Dorsolateral prefrontal cortex (tissue), 120 donors: ENCODE measurements at regions of chr6 and their contacts with region 1.

Region 1: GRCh38 chr6:154156135-154156896 is 117.3 kb downstream of the OPRM1 start:
- DNase-seq: peak in 7 of 10 donors; percentile 7 to 57 (median 39)
- H3K4me3 ChIP-seq: peak overlapping the region in 1 of 59 donors; percentile 41
- H3K27ac ChIP-seq: peak overlapping the region in 29 of 59 donors; percentile 1 to 84 (median 43)
- H3K27me3 ChIP-seq: no peaks in the 10 kb centered on the region
- CTCF ChIP-seq: peak; percentile 13 to 73 (median 60)

Region 2: DNA sequence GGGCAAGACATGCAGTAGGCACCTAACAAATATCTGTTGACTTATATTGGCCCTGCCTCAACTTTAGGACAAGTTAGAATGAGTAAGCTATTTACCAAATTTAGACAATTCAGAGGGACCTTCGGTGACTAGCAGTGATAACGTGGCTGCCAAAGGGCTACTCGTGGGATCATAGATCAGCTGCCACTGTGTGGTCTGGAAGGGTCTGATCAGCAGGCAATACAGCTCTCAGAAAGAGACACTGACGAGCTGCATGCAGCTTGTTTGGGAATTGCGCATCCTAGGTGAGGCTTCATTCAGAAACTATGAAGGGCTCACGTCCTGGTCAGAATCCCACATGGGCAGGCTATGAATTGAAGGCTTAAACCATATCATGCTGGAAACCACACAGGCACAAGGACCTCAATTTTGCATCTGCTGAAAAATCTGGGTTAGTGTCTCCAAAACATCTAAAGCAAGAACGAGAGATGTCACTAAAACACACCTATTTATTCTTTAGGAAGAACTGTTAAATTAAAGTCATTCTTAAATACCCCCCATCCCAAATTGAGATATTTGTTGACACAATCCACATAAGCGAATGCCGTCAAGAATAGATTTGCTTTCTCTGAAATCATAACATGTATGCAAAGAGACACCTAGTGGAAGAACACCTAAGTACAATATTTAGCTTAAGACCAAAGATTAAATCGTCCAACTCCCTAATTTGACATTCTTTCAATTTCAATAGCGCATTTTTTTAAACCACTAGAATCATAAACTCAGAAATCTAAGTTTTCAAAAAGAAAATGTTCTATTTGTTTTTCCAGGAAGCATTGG is 120.7 kb after region 1 on chr6:
- intact Hi-C with region 1: loop called (anchors 2 to 5 kb)
- DNase-seq: no peak
- H3K4me3 ChIP-seq: peak overlapping the region in 40 of 59 donors; percentile 0 to 47 (median 28)
- H3K27ac ChIP-seq: peak overlapping the region in 1 of 59 donors; percentile 12
- H3K27me3 ChIP-seq: no peaks in the 10 kb centered on the region
- CTCF ChIP-seq: peak; percentile 44 to 84 (median 68)

Region 3: GRCh38 chr6:154370545-154370944 is 214.2 kb after region 1 on chr6:
- intact Hi-C with region 1: loop called (anchors 5 to 10 kb)
- DNase-seq: peak in 3 of 10 donors; percentile 45 to 60 (median 57)
- H3K4me3 ChIP-seq: peak overlapping the region in 16 of 59 donors; percentile 6 to 51 (median 24)
- H3K27ac ChIP-seq: peak overlapping the region in 3 of 59 donors; percentile 11 to 43 (median 30)
- H3K27me3 ChIP-seq: no peaks in the 10 kb centered on the region
- CTCF ChIP-seq: peak in 53 of 56 donors; percentile 32 to 75 (median 52)

Region 4: DNA sequence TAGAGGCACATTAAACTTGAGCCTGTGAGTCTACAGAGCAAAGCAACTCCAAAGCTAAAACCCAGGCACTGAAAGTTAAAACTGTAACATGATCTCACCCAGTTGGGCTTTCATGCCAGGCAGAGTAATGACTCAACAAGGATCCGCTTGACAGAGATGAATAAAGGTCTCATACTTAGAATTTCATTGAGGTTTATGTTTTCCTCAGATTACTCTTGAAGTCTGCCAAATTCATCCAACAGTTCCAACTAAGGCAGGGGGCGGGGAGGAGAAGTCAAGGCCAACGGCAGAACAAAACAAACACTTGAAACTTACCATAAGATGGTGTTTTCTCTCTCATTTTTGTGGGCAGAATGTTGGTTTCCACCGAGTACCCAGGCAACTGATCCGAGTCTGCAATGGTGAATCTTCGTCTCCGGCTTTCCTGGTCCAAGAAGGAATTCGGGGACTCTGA is 254.3 kb after region 1 on chr6:
- intact Hi-C with region 1: loop called in 1 of 2 experiments (anchors 5 kb)
- DNase-seq: peak in 1 of 10 donors; percentile 29
- H3K4me3 ChIP-seq: peak overlapping the region in 1 of 59 donors; percentile 33
- H3K27ac ChIP-seq: peak overlapping the region in 58 of 59 donors; percentile 2 to 91 (median 78)
- H3K27me3 ChIP-seq: no peaks in the 10 kb centered on the region
- CTCF ChIP-seq: peak in 1 of 56 donors; percentile 12

Region 5: DNA sequence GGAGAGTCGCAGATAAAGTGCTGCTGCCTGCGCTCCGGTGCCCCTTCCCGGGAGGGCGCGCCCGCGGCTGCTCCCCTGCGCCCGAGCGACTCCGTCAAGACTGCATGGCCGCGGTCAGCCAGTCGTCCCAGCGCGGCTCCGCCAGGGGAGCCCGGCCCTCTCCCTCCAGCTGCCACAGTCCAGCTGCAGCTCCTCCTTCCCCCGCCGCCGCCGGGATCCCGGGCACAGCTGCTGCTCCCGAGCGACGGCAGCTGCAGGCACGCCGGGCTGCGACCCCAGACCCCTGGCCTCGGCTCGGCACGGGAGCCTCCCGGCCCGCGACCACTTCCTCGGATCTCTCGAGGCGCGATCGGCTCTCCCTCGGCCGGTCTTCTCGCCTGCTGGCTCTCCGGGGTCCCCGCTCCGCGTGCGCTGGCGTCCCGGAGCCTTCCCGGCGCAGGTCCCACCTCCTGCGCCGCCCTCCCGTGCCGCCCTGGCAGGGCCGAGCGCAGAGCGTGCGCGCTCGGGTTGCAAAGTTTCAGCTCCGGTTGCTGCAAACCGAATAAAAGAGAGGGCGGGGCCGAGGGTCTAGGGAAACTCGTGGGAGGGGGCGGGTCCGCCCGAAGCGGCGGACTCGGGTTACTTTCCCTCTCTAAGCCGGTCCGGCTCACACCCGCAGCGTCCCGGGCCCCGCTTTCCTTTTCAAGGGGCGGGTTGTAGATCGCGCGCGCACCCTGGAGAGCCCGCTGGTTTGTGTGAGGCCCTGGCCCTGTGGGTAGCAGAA is 354.0 kb after region 1 on chr6 and contains the start of gene CNKSR3:
- intact Hi-C with region 1: loop called (anchors 5 to 10 kb)
- DNase-seq: peak; percentile 28 to 79 (median 71)
- H3K4me3 ChIP-seq: peak within 1 kb of the TSS; percentile 40 to 93 (median 82)
- H3K27ac ChIP-seq: peak within 1 kb of the TSS; percentile 69 to 96 (median 90)
- H3K27me3 ChIP-seq: no peaks in the 10 kb centered on the region
- CTCF ChIP-seq: peak in 27 of 56 donors; percentile 4 to 49 (median 18)
- total RNA-seq, gene CNKSR3: 7.3 to 35.6 (median 15.0) TPM

Region 6: DNA sequence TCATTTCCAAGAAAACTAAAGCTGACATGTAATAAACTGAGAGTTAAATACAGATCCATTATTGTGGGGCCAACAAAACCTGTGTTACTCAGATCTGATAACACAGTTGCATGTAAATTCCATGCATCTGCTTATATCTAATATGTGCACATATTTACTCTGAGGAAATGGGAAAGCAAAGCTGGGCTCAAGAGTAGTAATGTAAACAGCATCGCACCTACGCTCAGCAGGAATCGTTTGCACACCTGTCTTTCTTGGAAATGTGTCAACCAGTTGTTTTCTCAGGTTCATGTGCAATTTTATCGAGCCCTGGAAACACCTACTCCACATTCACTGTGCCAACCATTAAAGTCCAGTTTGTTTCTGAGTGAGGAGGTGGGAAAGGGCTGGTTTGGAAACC is 434.4 kb after region 1 on chr6:
- intact Hi-C with region 1: no loop called
- DNase-seq: no peak
- H3K4me3 ChIP-seq: no peak overlapping the region
- H3K27ac ChIP-seq: no peak overlapping the region
- H3K27me3 ChIP-seq: no peaks in the 10 kb centered on the region
- CTCF ChIP-seq: no peak

Region 7: GRCh38 chr6:154733012-154733625 is 576.8 kb after region 1 on chr6 and contains the start of gene SCAF8:
- intact Hi-C with region 1: loop called in 1 of 2 experiments (anchors 5 kb)
- DNase-seq: peak; percentile 46 to 90 (median 68)
- H3K4me3 ChIP-seq: peak within 1 kb of the TSS; percentile 55 to 100 (median 92)
- H3K27ac ChIP-seq: peak within 1 kb of the TSS; percentile 95 to 100 (median 100)
- H3K27me3 ChIP-seq: no peaks in the 10 kb centered on the region
- CTCF ChIP-seq: peak; percentile 49 to 97 (median 75)
- total RNA-seq, gene SCAF8: 46.7 to 79.8 (median 61.4) TPM